ENCODE measurements at regions of chr14 and their contacts with region 1.

Region 1: DNA sequence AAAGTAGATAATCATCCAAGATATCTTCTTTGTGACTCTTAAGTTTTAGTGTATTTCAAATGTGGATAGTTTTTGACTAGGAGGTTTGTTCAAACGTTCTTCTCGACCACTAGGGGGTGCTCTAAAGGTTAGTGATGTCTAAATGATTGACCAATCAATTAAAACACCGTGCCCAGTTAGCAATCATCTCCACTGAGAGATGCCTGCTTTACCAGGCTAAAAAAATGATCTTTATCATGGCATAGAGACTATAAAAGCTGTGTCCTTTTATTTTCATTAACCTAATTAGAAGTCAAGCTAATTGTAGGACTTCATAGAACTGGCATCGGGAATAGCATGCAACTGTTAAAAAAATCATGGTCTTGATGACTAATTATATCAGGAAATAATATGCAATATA is 153.9 kb downstream of the PRKCH start:
- DNase-seq: no peak
- ATAC-seq: no peak
- H3K4me3 Mint-ChIP-seq: no peak overlapping the region
- H3K27ac Mint-ChIP-seq: peak overlapping the region; percentile 84
- H3K4me1 Mint-ChIP-seq: peaks cover 91% of the 10 kb centered on the region
- H3K27me3 Mint-ChIP-seq: no peaks in the 10 kb centered on the region

Region 2: GRCh38 chr14:61244009-61244408 is 231.3 kb before region 1 on chr14:
- CTCF ChIA-PET with region 1: no interaction called
- POLR2A ChIA-PET with region 1: no interaction called
- intact Hi-C with region 1: no loop called
- DNase-seq: no peak
- ATAC-seq: no peak
- H3K4me3 Mint-ChIP-seq: no peak overlapping the region
- H3K27ac Mint-ChIP-seq: no peak overlapping the region
- H3K4me1 Mint-ChIP-seq: peaks cover 2% of the 10 kb centered on the region
- H3K27me3 Mint-ChIP-seq: peaks cover 11% of the 10 kb centered on the region

Region 3: DNA sequence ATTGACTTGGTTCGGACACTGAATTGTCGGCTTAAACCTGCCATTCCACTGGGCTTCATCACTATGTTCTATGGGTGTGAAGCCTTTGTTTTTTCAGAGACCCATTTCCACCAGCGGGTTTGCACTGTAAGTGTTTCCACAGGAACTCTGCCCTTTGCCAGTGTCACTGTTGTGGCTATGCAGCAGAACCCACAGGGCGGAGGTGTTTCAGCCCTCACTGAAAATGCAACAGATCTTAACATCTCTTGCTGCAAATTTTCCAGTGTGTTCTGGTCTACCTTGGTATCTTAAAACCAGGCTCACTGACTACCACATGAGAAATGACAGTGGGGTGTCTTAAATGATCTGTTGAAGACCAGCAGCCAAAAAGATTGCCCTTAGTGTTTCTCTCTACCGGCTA is 132.8 kb before region 1 on chr14:
- CTCF ChIA-PET with region 1: no interaction called
- POLR2A ChIA-PET with region 1: interaction called, 3 read pairs
- intact Hi-C with region 1: loop called in 1 of 2 experiments (anchors 2 kb)
- DNase-seq: peak; percentile 91
- ATAC-seq: peak; percentile 60
- H3K4me3 Mint-ChIP-seq: peak overlapping the region; percentile 86
- H3K27ac Mint-ChIP-seq: peak overlapping the region; percentile 99
- H3K4me1 Mint-ChIP-seq: peaks cover 94% of the 10 kb centered on the region
- H3K27me3 Mint-ChIP-seq: no peaks in the 10 kb centered on the region

Region 4: DNA sequence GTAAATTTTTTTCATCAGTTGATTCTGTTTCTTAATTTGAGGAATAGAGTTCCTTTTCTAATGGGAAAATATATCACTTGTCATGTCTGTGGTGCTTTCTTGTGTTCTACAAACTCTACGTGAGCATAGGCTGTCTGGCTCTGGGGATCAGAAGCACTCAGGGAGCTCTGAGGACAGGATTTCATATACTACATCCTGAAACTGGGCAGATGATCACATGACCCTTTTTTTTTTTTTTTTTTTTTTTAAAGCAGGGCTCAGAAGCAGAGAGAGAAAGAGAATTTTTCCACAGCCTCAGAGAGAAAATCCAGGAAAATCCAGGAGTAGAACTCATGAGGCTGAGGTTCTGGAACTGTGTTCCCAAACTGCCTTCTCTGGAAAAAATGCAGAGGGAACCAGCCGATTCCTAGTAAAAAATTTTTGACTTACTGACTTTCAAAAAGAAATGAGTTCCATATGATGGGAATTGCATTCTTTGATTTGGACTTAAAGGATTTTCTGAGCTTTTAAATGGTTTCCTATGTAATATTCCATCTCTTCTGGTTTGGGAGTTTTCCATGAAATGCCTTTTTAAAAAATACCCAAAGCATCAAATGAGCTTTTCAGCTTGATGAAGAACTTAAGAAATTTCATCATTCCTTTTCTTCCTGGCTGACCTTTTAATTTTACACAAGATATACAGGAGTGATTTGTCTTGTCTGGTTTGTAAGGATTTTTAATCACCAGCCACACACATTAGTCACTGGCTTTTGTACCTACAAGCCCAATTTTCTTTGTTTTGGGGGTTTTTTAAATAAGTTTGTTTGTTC is 36.9 kb after region 1 on chr14:
- CTCF ChIA-PET with region 1: interaction called, 32 read pairs
- POLR2A ChIA-PET with region 1: interaction called, 23 read pairs
- intact Hi-C with region 1: loop called in 1 of 2 experiments (anchors 1 kb)
- DNase-seq: peak; percentile 44
- ATAC-seq: peak; percentile 59
- H3K4me3 Mint-ChIP-seq: peak overlapping the region; percentile 54
- H3K27ac Mint-ChIP-seq: peak overlapping the region; percentile 97
- H3K4me1 Mint-ChIP-seq: peaks cover 94% of the 10 kb centered on the region
- H3K27me3 Mint-ChIP-seq: no peaks in the 10 kb centered on the region

Region 5: GRCh38 chr14:61568572-61569131 is 93.3 kb after region 1 on chr14:
- CTCF ChIA-PET with region 1: interaction called, 5 read pairs
- POLR2A ChIA-PET with region 1: interaction called, 5 read pairs
- intact Hi-C with region 1: loop called in 1 of 2 experiments (anchors 2 kb)
- DNase-seq: peak; percentile 77
- ATAC-seq: peak; percentile 50
- H3K4me3 Mint-ChIP-seq: peak overlapping the region; percentile 47
- H3K27ac Mint-ChIP-seq: peak overlapping the region; percentile 85
- H3K4me1 Mint-ChIP-seq: peaks cover 80% of the 10 kb centered on the region
- H3K27me3 Mint-ChIP-seq: peaks cover 3% of the 10 kb centered on the region

Region 6: DNA sequence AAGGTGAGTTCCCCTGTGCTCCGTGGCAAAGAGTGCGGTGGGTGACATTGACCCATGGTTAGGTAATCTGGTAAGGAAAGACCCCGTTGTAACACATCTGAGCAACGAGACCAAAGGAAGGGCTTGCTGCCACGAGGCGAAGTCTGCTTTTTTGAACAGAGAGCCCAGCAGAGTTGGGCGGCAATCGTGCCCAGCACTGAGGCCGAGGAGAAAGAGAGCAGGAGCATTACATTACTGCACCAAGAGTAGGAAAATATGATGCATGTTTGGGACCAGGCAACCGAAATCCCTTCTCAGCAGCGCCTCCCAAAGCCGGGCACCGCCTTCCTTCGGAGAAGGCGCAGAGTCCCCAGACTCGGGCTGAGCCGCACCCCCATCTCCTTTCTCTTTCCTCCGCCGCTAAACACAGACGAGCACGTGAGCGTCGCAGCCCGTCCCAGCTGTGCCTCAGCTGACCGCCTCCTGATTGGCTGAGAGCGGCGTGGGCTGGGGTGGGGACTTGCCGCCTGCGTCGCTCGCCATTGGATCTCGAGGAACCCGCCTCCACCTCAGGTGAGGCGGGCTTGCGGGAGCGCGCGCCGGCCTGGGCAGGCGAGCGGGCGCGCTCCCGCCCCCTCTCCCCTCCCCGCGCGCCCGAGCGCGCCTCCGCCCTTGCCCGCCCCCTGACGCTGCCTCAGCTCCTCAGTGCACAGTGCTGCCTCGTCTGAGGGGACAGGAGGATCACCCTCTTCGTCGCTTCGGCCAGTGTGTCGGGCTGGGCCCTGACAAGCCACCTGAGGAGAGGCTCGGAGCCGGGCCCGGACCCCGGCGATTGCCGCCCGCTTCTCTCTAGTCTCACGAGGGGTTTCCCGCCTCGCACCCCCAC is 219.7 kb after region 1 on chr14 and contains the start of gene HIF1A:
- CTCF ChIA-PET with region 1: interaction called, 3 read pairs
- POLR2A ChIA-PET with region 1: interaction called, 6 read pairs
- intact Hi-C with region 1: loop called (anchors 1 kb)
- DNase-seq: peak; percentile 99
- ATAC-seq: peak; percentile 87
- H3K4me3 Mint-ChIP-seq: peak within 1 kb of the TSS; percentile 99
- H3K27ac Mint-ChIP-seq: peak within 1 kb of the TSS; percentile 98
- H3K4me1 Mint-ChIP-seq: peaks cover 50% of the 10 kb centered on the region
- H3K27me3 Mint-ChIP-seq: no peaks in the 10 kb centered on the region
- total RNA-seq, gene HIF1A: 196 to 329 TPM

Region 7: GRCh38 chr14:61837336-61838229 is 362.3 kb after region 1 on chr14:
- CTCF ChIA-PET with region 1: interaction called, 20 read pairs
- POLR2A ChIA-PET with region 1: no interaction called
- intact Hi-C with region 1: no loop called
- DNase-seq: peak; percentile 87
- ATAC-seq: peak; percentile 95
- H3K4me3 Mint-ChIP-seq: no peak overlapping the region
- H3K27ac Mint-ChIP-seq: no peak overlapping the region
- H3K4me1 Mint-ChIP-seq: peaks cover 4% of the 10 kb centered on the region
- H3K27me3 Mint-ChIP-seq: no peaks in the 10 kb centered on the region